ENCODE measurements at regions of chr10 and their contacts with region 1.

Region 1: GRCh38 chr10:73759512-73760115 is 15.4 kb downstream of the SEC24C start:
- DNase-seq: peak; percentile 38
- CTCF ChIP-seq: no peak

Region 2: DNA sequence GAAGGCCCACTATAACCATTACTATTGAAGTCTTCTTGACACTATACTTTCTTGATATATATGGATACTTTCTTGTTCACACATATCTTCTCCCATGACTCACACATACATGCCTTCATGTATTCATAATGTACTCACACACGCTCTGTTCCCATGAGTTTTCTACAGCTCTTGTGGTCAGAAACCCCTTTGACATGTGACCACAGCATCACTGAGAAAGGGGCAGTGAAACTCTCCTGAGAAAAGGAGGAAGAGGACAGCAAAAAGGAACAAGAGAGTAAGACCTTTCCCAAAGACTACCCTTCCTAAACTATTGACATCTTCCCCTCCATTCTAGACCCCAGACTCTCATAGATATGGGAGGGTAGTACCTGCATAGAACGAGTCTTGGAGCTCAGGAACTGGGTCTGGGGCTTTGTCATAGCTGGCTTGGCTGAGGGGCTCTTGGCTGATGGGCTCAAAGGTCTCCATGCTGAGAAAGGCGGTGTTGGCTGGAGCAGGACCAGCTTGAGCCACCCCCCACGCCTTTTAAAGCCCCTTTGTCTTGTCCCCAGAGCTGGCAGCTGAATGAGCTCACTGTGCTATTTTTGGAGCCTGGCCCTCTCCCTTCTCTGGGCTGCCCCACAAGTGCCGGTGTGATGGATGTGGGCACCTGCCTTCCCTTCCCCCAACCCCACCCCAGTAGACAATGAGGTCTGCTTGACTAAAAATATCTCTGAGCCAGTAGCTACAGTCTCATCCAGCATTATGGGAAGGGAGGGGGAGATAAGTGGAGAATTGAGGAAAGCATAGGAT is 108.9 kb before region 1 on chr10:
- CTCF ChIA-PET with region 1: no interaction called
- POLR2A ChIA-PET with region 1: interaction called, 10 read pairs
- DNase-seq: peak; percentile 53
- CTCF ChIP-seq: no peak

Region 3: GRCh38 chr10:73743905-73744663 is 15.5 kb before region 1 on chr10 and contains the start of gene SEC24C:
- CTCF ChIA-PET with region 1: interaction called, 14 read pairs
- POLR2A ChIA-PET with region 1: interaction called, 4 read pairs
- DNase-seq: peak; percentile 94
- CTCF ChIP-seq: no peak

Region 4: DNA sequence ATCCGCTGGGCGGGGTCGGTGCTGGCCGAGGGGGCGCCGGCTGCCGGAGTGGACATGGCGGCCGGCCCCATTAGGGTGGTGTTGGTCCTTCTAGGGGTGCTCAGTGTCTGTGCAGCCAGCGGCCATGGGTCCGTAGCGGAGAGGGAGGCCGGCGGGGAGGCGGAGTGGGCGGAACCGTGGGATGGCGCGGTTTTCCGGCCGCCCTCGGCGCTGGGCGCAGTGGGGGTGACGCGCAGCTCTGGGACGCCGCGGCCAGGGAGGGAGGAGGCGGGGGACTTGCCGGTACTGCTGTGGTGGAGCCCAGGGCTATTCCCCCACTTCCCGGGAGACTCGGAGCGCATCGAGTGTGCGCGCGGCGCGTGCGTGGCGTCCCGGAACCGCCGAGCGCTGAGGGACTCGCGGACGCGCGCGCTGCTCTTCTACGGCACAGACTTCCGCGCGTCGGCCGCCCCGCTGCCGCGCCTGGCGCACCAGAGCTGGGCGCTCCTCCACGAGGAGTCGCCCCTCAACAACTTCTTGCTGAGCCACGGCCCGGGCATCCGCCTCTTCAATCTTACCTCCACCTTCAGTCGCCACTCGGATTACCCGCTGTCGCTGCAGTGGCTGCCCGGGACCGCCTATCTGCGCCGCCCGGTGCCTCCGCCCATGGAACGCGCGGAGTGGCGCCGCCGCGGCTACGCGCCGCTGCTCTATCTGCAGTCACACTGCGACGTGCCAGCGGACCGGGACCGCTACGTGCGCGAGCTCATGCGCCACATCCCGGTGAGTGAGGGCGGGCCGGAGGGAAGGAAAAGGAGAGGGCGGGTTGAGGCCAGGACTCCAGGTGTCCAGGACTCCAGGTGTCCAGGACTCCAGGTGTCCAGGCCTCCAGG is 12.9 kb after region 1 on chr10:
- CTCF ChIA-PET with region 1: interaction called, 32 read pairs
- POLR2A ChIA-PET with region 1: interaction called, 9 read pairs
- DNase-seq: peak; percentile 82
- CTCF ChIP-seq: no peak

Region 5: DNA sequence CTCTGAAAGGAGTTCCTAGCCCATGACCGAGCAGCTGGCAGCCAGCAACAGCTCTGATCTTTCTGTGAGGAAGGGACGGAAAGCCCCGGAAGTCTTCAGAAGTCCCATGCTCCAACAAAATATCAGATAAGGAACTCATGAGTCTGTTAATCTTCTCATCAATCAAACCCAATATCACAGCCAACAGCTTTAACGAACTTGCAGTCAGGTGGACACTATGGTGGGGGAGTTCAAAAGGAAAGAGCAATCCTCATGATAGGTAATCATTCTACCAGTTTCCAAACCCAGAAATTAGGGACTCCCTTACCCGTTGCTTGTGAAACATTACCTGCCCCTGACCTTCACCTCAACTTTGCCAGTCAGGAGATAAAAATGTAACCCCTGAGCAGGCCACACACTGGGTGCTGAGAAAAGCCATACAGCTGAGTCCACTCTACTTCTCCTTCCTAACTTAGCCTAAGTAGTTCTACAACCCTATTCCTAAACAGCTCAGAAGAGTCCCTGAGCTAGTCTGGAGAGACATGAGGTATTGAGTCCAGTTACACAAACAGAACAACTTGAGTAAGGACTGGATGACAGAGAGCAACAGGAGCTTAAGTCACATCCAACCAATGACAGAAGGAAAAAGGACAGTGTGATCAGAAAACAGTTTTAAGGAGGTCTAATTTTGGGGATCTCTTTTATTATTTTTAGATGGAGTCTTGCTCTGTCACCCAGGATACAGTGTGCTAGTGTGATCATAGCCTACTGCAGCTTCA is 49.6 kb after region 1 on chr10:
- CTCF ChIA-PET with region 1: no interaction called
- POLR2A ChIA-PET with region 1: no interaction called
- DNase-seq: no peak
- CTCF ChIP-seq: no peak

Region 6: DNA sequence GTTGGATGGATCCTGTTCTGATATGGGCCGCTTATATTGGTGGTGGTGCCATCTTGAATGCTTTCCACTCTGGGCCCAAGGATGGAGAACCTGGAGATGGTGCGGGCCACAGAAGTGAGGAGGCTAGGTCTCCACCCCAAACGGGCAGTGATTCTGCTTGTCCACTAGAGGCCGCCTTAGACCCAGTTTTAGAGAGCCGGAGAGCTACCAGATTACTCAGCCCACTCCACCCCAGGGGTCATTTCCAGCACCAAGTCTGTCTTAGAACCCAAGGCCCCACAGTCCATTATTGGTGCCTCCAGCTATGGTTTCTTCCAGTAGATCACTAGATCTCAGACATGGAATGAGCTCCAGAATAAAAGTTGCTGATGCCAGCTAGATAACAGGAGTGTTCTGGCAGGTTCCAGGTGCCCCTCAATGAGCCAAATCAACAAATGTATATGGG is 126.5 kb after region 1 on chr10:
- CTCF ChIA-PET with region 1: no interaction called
- POLR2A ChIA-PET with region 1: no interaction called
- DNase-seq: peak; percentile 83
- CTCF ChIP-seq: peak; percentile 83